Endothelial cell of umbilical vein (primary cell): ENCODE measurements at regions of chr10 and their contacts with region 1.

Region 1: DNA sequence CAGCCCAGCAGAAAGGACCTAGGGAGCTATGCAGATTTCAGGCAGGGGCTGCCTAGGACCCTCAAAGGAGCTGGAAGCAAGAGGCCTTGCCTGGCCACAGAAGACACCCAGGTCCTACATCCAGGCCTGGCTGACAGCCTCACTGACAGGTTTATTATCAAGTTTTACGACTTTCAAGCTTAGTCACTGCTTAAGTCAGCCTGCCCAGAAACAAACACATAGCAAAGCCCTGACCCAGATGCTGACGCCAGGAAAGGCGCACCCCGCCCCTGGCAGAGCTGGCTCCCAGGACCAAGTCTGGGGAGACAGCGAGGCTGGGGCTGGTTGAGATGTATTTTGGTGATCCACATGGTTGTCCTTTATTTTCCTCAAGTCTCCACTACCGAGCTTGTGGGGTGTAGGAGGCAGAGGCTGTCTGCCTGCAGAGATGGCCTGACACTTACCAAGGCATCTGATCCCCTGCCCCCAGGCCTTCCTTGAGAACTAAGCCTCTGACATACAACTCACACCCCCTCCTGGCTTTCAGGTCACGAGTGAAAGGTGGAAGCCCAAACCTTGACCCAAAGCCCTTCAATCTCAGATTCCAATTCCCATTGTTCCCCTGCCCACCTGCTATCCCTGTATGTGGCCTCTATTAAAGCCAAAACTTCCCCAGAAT is 80.7 kb upstream of the EMX2 start:
- DNase-seq: peak; percentile 95
- H3K4me3 ChIP-seq: no peak overlapping the region
- H3K27ac ChIP-seq: peak overlapping the region; percentile 89
- H3K4me1 ChIP-seq: peaks cover 38% of the 10 kb centered on the region
- H3K27me3 ChIP-seq: no peaks in the 10 kb centered on the region
- CTCF ChIP-seq: no peak
- POLR2A ChIP-seq: no peak

Region 2: GRCh38 chr10:117375360-117376178 is 86.3 kb before region 1 on chr10 and contains the start of gene PDZD8:
- CTCF ChIA-PET with region 1: no interaction called
- POLR2A ChIA-PET with region 1: no interaction called
- dilution Hi-C with region 1: no loop called
- intact Hi-C with region 1: loop called (anchors 1 kb)
- DNase-seq: peak; percentile 92
- H3K4me3 ChIP-seq: peak within 1 kb of the TSS; percentile 47 to 88 (median 84)
- H3K27ac ChIP-seq: peak within 1 kb of the TSS; percentile 83
- H3K4me1 ChIP-seq: peaks cover 21% of the 10 kb centered on the region
- H3K27me3 ChIP-seq: peaks cover 22 to 29% of the 10 kb centered on the region in 2 experiments
- CTCF ChIP-seq: no peak
- POLR2A ChIP-seq: peak; percentile 87
- total RNA-seq, gene PDZD8: 21.9 and 22.6 TPM in 2 replicates

Region 3: DNA sequence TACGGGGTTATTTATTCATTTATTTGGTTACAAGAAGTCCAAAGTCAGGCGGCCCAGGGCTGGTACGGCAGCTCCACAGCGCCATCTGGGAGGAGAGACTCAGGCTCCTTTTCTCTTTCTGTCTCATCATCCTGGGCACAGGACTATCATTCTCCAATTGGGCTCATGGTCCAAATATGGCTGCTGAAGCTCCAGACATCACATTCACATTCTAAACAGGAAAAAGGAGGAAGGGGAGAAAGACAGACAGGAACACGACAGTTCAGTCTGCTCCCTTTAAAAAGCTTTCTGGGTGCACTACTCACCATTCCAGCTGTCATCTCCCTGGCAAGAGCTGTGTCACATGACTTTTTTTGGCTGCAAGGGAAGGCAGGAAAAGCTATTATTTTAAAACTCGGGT is 12.3 kb before region 1 on chr10:
- CTCF ChIA-PET with region 1: interaction called, 12 read pairs
- POLR2A ChIA-PET with region 1: no interaction called
- dilution Hi-C with region 1: no loop called
- intact Hi-C with region 1: no loop called
- DNase-seq: no peak
- H3K4me3 ChIP-seq: no peak overlapping the region
- H3K27ac ChIP-seq: no peak overlapping the region
- H3K4me1 ChIP-seq: peaks cover 4% of the 10 kb centered on the region
- H3K27me3 ChIP-seq: peaks cover 1 to 4% of the 10 kb centered on the region in 2 experiments
- CTCF ChIP-seq: peak in 1 of 2 donors; percentile 9
- POLR2A ChIP-seq: no peak

Region 4: GRCh38 chr10:117477961-117478670 is 16.2 kb after region 1 on chr10:
- CTCF ChIA-PET with region 1: interaction called, 20 read pairs
- POLR2A ChIA-PET with region 1: interaction called, 3 read pairs
- dilution Hi-C with region 1: no loop called
- intact Hi-C with region 1: no loop called
- DNase-seq: peak; percentile 44
- H3K4me3 ChIP-seq: no peak overlapping the region
- H3K27ac ChIP-seq: no peak overlapping the region
- H3K4me1 ChIP-seq: no peaks in the 10 kb centered on the region
- H3K27me3 ChIP-seq: peaks cover 2 to 6% of the 10 kb centered on the region in 2 experiments
- CTCF ChIP-seq: peak in 1 of 2 donors; percentile 18
- POLR2A ChIP-seq: no peak

Region 5: DNA sequence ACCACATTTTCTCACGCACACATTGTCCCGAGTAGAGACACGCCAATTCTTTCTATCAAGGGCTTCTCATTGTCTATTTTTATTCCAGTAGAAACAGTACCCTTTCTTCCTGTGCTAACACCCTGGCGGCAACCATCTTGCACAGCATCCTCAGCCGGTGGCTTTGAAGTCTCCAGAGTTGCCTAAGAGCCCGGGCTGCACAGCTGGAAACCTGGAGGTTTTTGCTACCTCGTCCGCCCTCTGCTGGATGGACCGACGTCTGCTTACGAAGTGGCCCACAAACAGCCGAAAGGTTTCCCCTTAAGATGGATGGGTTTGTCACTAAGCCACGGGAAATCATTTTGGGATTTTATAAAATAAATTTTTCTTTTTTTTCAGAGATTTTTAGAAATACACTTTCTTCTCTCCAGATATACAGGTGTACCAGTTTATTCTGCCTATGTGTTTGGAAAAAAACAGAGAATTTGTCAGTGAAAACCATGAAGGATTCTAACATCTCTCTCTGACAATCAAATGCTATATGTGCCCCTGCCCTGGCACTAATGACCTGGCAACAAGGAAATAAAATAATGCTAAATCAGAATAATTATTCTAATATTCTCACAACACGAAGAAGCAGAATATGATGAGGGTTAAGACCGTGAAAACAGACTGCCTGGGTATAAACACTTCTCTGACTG is 962.0 kb after region 1 on chr10:
- CTCF ChIA-PET with region 1: no interaction called
- POLR2A ChIA-PET with region 1: no interaction called
- dilution Hi-C with region 1: no loop called
- intact Hi-C with region 1: no loop called
- DNase-seq: peak; percentile 75
- H3K4me3 ChIP-seq: no peak overlapping the region
- H3K27ac ChIP-seq: no peak overlapping the region
- H3K4me1 ChIP-seq: no peaks in the 10 kb centered on the region
- H3K27me3 ChIP-seq: no peaks in the 10 kb centered on the region
- CTCF ChIP-seq: peak; percentile 62 to 78
- POLR2A ChIP-seq: no peak